Activated naive CD4-positive, alpha-beta T cell treated with anti-CD3 and anti-CD28 coated beads for 36 hours (primary cell): ENCODE measurements at regions of chrX and their contacts with region 1.

Region 1: DNA sequence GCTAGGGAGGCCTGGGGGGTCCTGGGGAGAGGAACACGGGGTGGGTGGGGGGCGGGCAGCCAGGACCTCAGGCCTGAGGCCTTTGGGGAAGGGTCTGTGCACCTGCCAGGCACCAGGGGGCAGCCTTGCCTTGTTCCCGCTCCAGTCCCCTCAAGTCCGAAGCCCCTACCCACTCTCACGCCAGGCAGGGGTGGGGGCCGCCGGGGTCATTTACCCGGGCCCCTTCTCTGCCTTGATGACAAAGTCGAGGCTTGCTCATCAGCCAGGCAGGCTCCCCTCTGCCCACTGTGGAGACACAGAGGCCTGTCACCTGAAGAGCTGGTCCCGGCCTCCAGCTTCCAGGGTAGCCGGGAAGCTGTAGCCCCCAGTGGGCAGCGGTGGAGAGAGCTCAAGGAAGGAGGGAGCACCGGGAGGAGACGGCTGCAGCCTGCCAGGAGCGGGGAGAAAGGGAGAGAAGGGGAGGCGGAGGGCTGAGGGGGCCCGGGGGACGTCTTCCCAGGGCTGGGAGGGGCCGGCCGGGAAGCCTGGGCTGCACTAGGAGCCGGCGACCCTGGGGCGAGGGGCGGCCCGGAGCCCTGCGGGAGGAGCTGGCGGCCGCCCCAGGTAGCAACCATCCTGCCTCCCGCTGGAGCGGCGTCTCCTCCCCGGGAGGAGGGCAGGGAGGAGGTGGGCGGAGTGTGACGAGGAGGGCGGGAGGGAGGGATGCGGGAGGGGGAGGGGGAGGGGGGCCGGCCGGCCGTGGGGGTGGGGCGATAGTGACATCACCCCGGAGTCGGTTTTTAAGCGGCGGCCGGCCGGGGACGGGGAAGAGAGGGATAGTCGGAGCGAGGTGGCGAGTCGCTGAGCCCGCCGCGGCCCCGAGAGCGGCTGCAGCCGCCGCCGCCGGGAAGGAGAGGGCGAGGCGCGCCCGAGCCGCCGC is at the start of gene SLC6A8:
- DNase-seq: peak; percentile 42
- H3K4me3 Mint-ChIP-seq: peak within 1 kb of the TSS; percentile 61
- H3K27ac Mint-ChIP-seq: no peak within 1 kb of the TSS
- H3K4me1 Mint-ChIP-seq: no peaks in the 10 kb centered on the region
- H3K27me3 Mint-ChIP-seq: peaks cover 4% of the 10 kb centered on the region
- total RNA-seq, gene SLC6A8: 0.32 to 0.41 TPM

Region 2: DNA sequence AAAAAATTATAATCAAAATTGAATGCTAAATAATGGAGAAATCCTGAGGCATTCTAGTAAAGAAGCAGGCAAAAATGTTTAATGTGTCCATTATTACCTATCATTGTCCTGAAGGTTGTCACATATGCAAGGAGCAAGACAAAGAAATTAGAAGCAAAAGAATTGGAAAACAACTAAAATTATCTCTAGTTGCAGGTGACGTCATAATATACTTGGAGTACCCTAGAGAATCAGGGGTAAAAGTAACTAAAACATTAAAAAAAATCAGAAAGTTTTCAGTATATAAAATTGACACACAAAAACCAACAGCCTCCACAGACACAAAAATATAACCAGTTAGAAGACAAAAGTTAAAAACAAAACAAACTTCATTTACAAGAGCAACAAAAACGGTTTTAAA is 486.9 kb before region 1 on chrX:
- CTCF ChIA-PET with region 1: no interaction called
- intact Hi-C with region 1: no loop called
- DNase-seq: no peak
- H3K4me3 Mint-ChIP-seq: no peak overlapping the region
- H3K27ac Mint-ChIP-seq: no peak overlapping the region
- H3K4me1 Mint-ChIP-seq: no peaks in the 10 kb centered on the region
- H3K27me3 Mint-ChIP-seq: peaks cover 7% of the 10 kb centered on the region

Region 3: DNA sequence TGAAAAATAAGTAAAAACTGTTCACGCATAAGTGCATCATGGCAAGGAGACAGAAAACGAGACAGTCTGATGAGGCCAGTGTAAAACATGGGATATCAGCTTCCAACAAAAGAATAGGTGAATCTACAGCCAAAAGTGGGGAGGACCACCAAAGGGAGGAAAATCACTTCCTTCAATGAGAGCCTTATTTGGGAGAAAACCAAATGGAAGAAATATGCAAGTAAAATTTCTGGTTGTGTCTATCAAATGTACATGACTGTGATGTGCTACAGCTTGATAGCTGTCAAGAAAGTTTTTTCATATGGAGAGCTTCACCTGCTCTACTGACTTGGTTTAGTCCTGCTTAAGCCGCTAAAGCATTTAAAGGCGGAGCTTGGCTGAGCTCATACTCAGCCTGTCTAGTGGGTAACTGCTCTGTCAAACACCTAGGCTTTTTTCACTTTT is 442.1 kb before region 1 on chrX:
- CTCF ChIA-PET with region 1: no interaction called
- intact Hi-C with region 1: no loop called
- DNase-seq: no peak
- H3K4me3 Mint-ChIP-seq: no peak overlapping the region
- H3K27ac Mint-ChIP-seq: no peak overlapping the region
- H3K4me1 Mint-ChIP-seq: peaks cover 2% of the 10 kb centered on the region
- H3K27me3 Mint-ChIP-seq: no peaks in the 10 kb centered on the region

Region 4: GRCh38 chrX:153708415-153708814 is 21.0 kb after region 1 on chrX:
- CTCF ChIA-PET with region 1: interaction called, 3 read pairs
- intact Hi-C with region 1: loop called (anchors 1 kb)
- DNase-seq: peak; percentile 67
- H3K4me3 Mint-ChIP-seq: no peak overlapping the region
- H3K27ac Mint-ChIP-seq: no peak overlapping the region
- H3K4me1 Mint-ChIP-seq: peaks cover 4% of the 10 kb centered on the region
- H3K27me3 Mint-ChIP-seq: no peaks in the 10 kb centered on the region

Region 5: DNA sequence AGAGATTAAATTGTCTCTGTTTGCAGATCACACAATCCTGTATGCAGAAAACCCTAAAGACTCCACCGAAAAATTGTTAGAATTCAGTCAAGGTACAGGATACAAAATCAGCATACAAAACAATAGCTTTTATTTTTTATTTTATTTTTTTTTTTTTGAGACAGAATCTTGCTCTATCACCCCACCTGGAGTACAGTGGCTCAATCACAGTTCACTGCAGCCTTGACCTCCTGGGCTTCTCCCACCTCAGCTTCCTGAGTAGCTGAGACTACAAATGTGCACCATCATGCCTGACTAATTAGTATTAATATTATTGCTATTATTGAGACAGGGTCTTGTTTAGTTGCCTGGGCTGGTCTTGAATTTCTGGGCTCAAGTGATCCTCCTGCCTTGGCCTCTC is 67.8 kb after region 1 on chrX:
- CTCF ChIA-PET with region 1: no interaction called
- intact Hi-C with region 1: loop called (anchors 2 kb)
- DNase-seq: no peak
- H3K4me3 Mint-ChIP-seq: no peak overlapping the region
- H3K27ac Mint-ChIP-seq: no peak overlapping the region
- H3K4me1 Mint-ChIP-seq: no peaks in the 10 kb centered on the region
- H3K27me3 Mint-ChIP-seq: no peaks in the 10 kb centered on the region